ENCODE measurements at regions of chr22 and their contacts with region 1.

Region 1: GRCh38 chr22:46762238-46763050 is at the start of gene TBC1D22A:
- DNase-seq: peak; percentile 97
- ATAC-seq: peak; percentile 90
- H3K4me3 Mint-ChIP-seq: peak within 1 kb of the TSS; percentile 94
- H3K27ac Mint-ChIP-seq: peak within 1 kb of the TSS; percentile 99
- H3K4me1 Mint-ChIP-seq: peaks cover 58% of the 10 kb centered on the region
- H3K27me3 Mint-ChIP-seq: no peaks in the 10 kb centered on the region
- total RNA-seq, gene TBC1D22A: 36.0 to 38.0 TPM

Region 2: DNA sequence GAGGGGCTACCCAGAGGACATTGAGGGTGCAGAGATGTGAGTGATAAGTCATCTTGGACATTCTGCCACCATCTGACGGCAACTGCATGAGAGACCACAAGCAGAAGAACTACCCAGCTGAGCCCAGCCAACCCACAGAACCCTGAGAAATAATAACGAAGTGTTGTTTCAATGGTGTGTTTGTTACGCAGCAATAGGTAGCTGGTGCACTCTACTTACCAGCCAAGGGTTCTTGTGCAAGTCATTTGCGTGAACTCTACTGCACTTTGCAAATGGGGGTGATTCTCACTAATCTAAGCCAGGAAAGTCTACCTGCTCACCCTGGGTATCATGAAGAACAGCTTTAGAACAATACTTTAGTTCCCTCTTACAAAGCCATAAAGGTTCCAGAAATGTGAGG is 209.3 kb before region 1 on chr22:
- CTCF ChIA-PET with region 1: no interaction called
- POLR2A ChIA-PET with region 1: no interaction called
- intact Hi-C with region 1: no loop called
- DNase-seq: no peak
- ATAC-seq: no peak
- H3K4me3 Mint-ChIP-seq: no peak overlapping the region
- H3K27ac Mint-ChIP-seq: no peak overlapping the region
- H3K4me1 Mint-ChIP-seq: no peaks in the 10 kb centered on the region
- H3K27me3 Mint-ChIP-seq: no peaks in the 10 kb centered on the region

Region 3: DNA sequence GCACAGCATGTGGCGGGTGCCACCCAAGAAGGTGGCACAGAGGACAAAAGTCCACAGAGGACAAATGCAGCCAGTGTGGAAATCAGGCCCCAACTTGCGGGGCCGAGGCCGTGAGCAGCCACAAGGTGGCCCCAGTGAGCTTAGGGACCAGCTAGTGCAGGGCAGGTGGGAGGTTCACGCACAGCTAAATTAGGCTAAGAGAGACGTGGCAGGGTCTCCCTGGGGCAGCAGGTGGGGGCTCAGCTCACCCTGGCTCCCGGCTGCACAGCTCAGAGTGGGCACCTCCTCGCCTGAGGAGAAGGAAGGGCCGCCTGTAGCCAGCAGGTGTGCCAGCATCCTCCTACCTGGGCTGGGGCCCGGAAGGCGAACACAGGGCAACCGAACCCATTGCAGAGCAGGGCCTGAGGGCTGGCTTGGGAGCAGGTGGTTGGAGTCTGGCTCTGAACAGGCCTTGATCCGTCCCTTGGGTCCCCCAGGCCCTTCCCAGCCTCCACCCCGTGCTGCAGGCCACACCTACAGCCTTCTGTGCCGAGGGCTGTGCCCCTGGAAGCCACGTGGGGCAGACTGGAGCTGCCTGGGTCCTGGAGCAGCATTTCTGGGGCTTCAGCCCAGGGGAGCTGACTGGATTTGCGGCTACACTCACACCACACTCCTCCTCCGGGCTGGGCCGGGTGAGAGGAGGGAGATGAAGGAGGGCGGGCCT is 198.9 kb before region 1 on chr22:
- CTCF ChIA-PET with region 1: interaction called, 17 read pairs
- POLR2A ChIA-PET with region 1: no interaction called
- intact Hi-C with region 1: no loop called
- DNase-seq: peak; percentile 90
- ATAC-seq: peak; percentile 87
- H3K4me3 Mint-ChIP-seq: peak overlapping the region; percentile 33
- H3K27ac Mint-ChIP-seq: peak overlapping the region; percentile 51
- H3K4me1 Mint-ChIP-seq: peaks cover 9% of the 10 kb centered on the region
- H3K27me3 Mint-ChIP-seq: no peaks in the 10 kb centered on the region

Region 4: DNA sequence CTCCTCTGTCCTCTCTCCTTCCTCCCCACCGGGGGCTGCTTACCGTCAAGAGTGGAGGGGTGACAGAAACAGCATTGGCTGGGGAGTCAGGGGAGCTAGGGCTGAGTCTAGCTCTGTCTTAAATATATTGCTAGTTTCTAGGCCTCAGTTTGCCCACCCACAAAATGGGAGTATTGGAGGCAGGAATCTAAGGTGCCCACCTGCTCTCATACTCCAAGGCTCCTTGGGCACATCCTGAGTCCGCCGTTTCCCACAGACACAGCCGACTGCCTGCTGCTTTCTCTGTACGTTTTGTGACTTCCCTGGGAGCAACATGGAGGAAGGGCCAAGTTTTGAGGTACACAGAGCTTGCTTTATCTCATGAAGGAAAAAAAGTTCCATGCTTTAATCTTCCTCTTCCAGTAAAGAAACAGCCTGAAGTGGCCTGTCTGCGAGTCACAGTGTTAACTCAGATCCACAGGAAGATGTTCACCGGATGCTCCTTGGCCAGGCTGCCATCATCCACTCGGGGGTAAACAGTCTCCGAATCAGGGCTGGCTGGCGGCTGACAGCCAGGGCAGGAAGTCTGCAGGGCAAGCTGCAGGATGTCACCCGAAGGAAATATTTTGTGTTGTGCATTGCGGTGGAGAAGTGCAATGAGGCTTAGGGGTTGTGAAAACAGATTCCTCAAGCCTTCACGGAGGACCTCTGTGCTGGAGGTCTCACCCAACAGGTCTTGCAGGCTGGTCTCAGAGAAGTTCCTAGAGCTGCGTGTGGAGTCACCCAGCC is 13.4 kb before region 1 on chr22:
- CTCF ChIA-PET with region 1: interaction called, 37 read pairs
- POLR2A ChIA-PET with region 1: interaction called, 4 read pairs
- intact Hi-C with region 1: no loop called
- DNase-seq: peak; percentile 65
- ATAC-seq: peak; percentile 68
- H3K4me3 Mint-ChIP-seq: peak overlapping the region; percentile 62
- H3K27ac Mint-ChIP-seq: peak overlapping the region; percentile 91
- H3K4me1 Mint-ChIP-seq: peaks cover 25% of the 10 kb centered on the region
- H3K27me3 Mint-ChIP-seq: no peaks in the 10 kb centered on the region

Region 5: GRCh38 chr22:46774253-46774979 is 12.0 kb after region 1 on chr22:
- CTCF ChIA-PET with region 1: interaction called, 13 read pairs
- POLR2A ChIA-PET with region 1: interaction called, 15 read pairs
- intact Hi-C with region 1: loop called (anchors 1 to 2 kb)
- DNase-seq: peak; percentile 62
- ATAC-seq: peak; percentile 17
- H3K4me3 Mint-ChIP-seq: peak overlapping the region; percentile 67
- H3K27ac Mint-ChIP-seq: peak overlapping the region; percentile 78
- H3K4me1 Mint-ChIP-seq: peaks cover 74% of the 10 kb centered on the region
- H3K27me3 Mint-ChIP-seq: no peaks in the 10 kb centered on the region

Region 6: GRCh38 chr22:46791201-46791731 is 28.8 kb after region 1 on chr22:
- CTCF ChIA-PET with region 1: interaction called, 6 read pairs
- POLR2A ChIA-PET with region 1: interaction called, 5 read pairs
- intact Hi-C with region 1: loop called (anchors 1 kb)
- DNase-seq: peak; percentile 88
- ATAC-seq: peak; percentile 93
- H3K4me3 Mint-ChIP-seq: peak overlapping the region; percentile 73
- H3K27ac Mint-ChIP-seq: peak overlapping the region; percentile 96
- H3K4me1 Mint-ChIP-seq: peaks cover 51% of the 10 kb centered on the region
- H3K27me3 Mint-ChIP-seq: no peaks in the 10 kb centered on the region

Measured in activated CD4-positive, alpha-beta T cell treated with anti-CD3 and anti-CD28 coated beads for 36 hours (primary cell).